Panc1 (cell line): ENCODE measurements at regions of chr17 and their contacts with region 1.

Region 1: DNA sequence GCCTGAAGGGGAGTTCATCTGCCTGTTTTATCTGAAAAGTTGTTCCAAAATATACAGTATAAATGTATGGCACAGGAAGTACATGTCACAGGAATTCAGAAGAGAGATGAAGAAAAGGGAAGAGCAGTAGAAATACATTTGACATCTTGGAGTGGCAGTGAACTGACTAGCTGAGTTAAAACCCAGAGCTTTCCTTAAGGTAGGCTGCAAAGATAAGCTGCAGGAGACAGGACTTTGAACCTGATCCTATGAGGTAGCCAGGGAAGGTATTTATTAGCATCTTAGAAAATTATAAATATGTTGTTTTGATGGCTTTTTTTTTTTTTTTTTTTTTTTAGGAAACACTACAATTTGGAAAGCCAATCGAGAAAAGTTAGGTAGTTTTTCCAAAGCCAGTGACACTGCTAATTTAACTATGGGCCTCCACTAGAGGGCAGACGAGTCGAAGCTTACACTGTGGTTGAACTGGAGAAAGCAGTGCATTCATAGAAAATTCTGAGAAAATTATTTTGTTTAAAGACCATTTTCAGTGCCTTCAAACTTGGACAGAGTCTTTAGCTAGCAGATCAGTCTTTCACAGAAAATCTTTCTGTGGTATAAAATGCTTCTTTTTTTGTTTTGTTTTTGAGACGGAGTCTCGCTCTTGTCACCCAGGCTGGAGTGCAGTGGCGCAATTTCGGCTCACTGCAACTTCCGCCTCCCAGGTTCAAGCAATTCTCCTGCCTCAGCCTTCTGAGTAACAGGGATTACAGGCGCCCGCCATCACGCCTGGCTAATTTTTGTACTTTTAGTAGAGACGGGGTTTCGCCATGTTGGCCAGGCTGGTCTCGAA is 122.3 kb downstream of the SSH2 start:
- DNase-seq: peak; percentile 30
- ATAC-seq: peak; percentile 86
- H3K4me3 ChIP-seq: no peak overlapping the region
- H3K27ac ChIP-seq: no peak overlapping the region
- H3K4me1 ChIP-seq: peaks cover 9% of the 10 kb centered on the region
- H3K27me3 ChIP-seq: no peaks in the 10 kb centered on the region
- CTCF ChIP-seq: peak; percentile 80; the same call in 1 of the 2 replicates

Region 2: GRCh38 chr17:29777663-29778062 is 30.1 kb before region 1 on chr17:
- CTCF ChIA-PET with region 1: interaction called, 3 read pairs
- POLR2A ChIA-PET with region 1: interaction called, 16 read pairs
- in situ Hi-C with region 1: no loop called
- intact Hi-C with region 1: no loop called
- DNase-seq: no peak
- ATAC-seq: no peak
- H3K4me3 ChIP-seq: no peak overlapping the region
- H3K27ac ChIP-seq: no peak overlapping the region
- H3K4me1 ChIP-seq: 0 out of 2 replicates have a peak, but pooled peaks cover 3% of the 10 kb centered on the region
- H3K27me3 ChIP-seq: no peaks in the 10 kb centered on the region
- CTCF ChIP-seq: no peak

Region 3: DNA sequence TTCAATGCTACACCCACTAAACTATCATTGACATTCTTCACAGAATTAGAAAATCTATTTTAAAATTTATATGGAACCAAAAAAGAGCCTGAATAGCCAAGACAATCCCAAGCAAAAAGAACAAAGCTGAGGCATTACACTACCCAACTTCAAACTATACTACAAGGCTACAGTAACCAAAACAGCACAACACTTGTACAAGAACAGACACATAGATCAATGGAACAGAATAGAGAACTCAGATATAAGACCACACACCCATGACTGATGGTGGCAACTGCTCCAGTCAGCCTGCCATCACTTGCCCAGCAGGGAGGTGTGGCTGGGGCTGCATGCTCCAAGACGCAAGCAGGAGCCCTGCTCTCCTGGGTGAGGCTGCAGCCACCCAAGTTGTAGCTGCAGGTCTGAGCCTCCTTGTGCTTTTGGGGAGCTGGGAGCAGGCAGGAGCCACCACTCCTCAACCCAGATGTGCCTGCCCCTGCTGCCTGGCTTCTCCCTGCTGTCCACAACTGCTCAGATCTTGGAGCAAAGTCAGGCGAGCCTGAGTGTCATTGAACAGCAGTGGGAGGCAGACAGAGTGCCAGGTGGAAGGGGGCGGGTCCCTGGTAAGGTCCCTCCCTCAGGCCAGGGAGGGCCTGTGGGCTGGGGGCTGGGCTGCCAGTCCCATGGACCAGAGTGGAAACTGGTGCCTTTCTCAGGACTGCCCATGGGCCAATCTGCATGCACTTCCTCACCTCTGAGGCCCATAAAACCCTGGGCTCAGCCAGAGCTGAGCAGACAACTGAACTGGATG is 97.5 kb after region 1 on chr17:
- CTCF ChIA-PET with region 1: no interaction called
- POLR2A ChIA-PET with region 1: interaction called, 16 read pairs
- in situ Hi-C with region 1: no loop called
- intact Hi-C with region 1: no loop called
- DNase-seq: no peak
- ATAC-seq: no peak
- H3K4me3 ChIP-seq: no peak overlapping the region
- H3K27ac ChIP-seq: no peak overlapping the region
- H3K4me1 ChIP-seq: no peaks in the 10 kb centered on the region
- H3K27me3 ChIP-seq: no peaks in the 10 kb centered on the region
- CTCF ChIP-seq: no peak

Region 4: DNA sequence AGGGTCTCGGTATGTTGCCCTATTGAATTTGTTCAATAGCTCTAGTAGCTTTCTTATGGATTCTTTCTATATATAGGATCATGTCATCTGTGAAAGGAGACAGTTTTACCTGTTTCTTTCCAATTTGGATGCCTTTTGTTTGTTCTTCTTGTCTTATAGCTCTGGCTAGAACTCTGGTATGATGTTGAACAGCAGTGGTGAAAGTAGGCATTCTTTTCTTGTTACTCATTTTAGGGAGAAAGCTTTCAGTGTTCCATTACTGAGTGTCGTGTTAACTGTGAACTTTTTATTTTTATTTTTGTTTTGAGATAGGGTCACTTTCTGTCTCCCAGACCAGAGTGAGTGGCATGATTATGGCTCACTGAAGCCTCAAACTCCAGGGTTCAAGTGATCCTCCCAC is 154.9 kb after region 1 on chr17:
- CTCF ChIA-PET with region 1: interaction called, 13 read pairs
- POLR2A ChIA-PET with region 1: no interaction called
- in situ Hi-C with region 1: no loop called
- intact Hi-C with region 1: no loop called
- DNase-seq: no peak
- ATAC-seq: no peak
- H3K4me3 ChIP-seq: no peak overlapping the region
- H3K27ac ChIP-seq: no peak overlapping the region
- H3K4me1 ChIP-seq: no peaks in the 10 kb centered on the region
- H3K27me3 ChIP-seq: no peaks in the 10 kb centered on the region
- CTCF ChIP-seq: no peak

Region 5: GRCh38 chr17:30021708-30022317 is 214.1 kb after region 1 on chr17:
- CTCF ChIA-PET with region 1: interaction called, 6 read pairs
- POLR2A ChIA-PET with region 1: no interaction called
- in situ Hi-C with region 1: no loop called
- intact Hi-C with region 1: loop called (anchors 5 kb)
- DNase-seq: peak; percentile 28
- ATAC-seq: peak; percentile 80
- H3K4me3 ChIP-seq: no peak overlapping the region
- H3K27ac ChIP-seq: no peak overlapping the region
- H3K4me1 ChIP-seq: no peaks in the 10 kb centered on the region
- H3K27me3 ChIP-seq: no peaks in the 10 kb centered on the region
- CTCF ChIP-seq: peak; percentile 81; the same call in 1 of the 2 replicates

Region 6: GRCh38 chr17:30084788-30085187 is 277.1 kb after region 1 on chr17:
- CTCF ChIA-PET with region 1: no interaction called
- POLR2A ChIA-PET with region 1: interaction called, 10 read pairs
- in situ Hi-C with region 1: no loop called
- intact Hi-C with region 1: no loop called
- DNase-seq: no peak
- ATAC-seq: no peak
- H3K4me3 ChIP-seq: no peak overlapping the region
- H3K27ac ChIP-seq: no peak overlapping the region
- H3K4me1 ChIP-seq: no peaks in the 10 kb centered on the region
- H3K27me3 ChIP-seq: peaks cover 11% of the 10 kb centered on the region
- CTCF ChIP-seq: no peak

Region 7: DNA sequence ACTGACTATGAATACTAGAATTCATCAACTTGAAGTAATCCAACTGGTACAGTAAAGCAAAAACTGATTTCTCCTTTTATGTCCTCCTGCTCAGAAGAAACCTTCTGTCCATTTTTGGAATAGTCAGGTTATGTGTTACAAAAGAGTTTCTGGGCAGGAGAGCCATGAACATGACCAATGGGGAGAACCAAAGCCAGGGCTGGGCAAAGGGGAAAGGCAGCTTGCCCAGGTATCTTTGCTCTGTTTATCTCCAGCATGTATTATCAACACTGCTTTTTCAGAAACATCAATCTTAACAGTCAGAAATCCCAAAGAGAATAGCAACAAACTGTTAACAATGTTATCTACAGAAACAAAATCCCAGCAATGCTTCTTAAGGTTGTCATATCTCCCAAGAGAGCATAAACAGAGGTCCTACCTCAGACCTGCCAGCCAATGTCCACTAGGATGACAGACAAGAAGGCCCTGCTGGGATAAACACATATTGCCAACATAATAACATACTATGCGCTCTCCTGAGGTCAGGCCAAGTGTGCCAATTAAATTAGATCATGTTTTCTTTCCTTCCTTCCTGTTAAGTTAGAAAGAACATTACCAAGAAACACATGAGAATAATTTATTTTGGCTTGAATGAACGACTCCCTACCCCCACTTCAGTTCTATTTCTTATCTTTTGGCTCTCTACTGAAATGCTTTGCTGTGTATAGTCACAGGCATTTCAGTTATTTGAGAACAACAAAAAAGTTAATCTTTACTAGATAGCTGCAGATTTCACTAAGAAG is 456.0 kb after region 1 on chr17:
- CTCF ChIA-PET with region 1: interaction called, 16 read pairs
- POLR2A ChIA-PET with region 1: no interaction called
- in situ Hi-C with region 1: no loop called
- intact Hi-C with region 1: no loop called
- DNase-seq: no peak
- ATAC-seq: no peak
- H3K4me3 ChIP-seq: no peak overlapping the region
- H3K27ac ChIP-seq: no peak overlapping the region
- H3K4me1 ChIP-seq: no peaks in the 10 kb centered on the region
- H3K27me3 ChIP-seq: no peaks in the 10 kb centered on the region
- CTCF ChIP-seq: no peak